Heart left ventricle (tissue), 16 donors: ENCODE measurements at regions of chr17 and their contacts with region 1.

Region 1: DNA sequence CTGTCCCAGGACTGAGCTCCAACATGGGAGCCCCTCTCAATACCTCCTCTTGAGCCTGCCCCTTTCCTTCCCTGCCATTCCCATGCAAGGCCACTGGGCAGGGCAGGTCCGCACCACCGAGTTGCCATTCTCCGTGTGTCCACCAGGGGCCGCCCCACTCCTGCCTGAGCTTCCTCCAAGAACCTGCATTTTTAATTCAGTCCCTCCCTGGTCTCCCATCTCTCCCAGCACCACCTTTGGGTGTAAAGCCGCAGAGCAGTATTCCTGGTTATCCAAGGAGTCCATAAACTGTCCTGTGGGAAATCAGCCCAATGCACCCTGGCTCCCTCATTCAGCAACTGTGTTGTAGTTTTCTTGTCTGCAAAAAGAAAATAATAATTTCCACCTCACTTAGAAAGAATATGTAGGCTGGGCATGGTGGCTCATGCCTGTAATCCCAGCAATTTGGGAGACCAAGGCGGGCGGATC is 15.9 kb upstream of the ANKRD40CL start:
- DNase-seq: peak; percentile 81 to 91 (median 84)
- ATAC-seq: peak; percentile 66 to 89 (median 86)
- H3K4me3 ChIP-seq: no peak overlapping the region
- H3K27ac ChIP-seq: no peak overlapping the region
- H3K4me1 ChIP-seq: peaks cover 0 to 19% (median 3%) of the 10 kb centered on the region in 12 donors
- H3K27me3 ChIP-seq: no peaks in the 10 kb centered on the region
- CTCF ChIP-seq: peak; percentile 93 to 99 (median 94)
- POLR2A ChIP-seq: no peak

Region 2: GRCh38 chr17:50707289-50708049 is 75.8 kb before region 1 on chr17 and contains the start of gene ANKRD40:
- intact Hi-C with region 1: no loop called
- DNase-seq: peak; percentile 91 to 94 (median 91)
- ATAC-seq: peak; percentile 80 to 92 (median 88)
- H3K4me3 ChIP-seq: peak within 1 kb of the TSS; percentile 50 to 81 (median 74)
- H3K27ac ChIP-seq: peak within 1 kb of the TSS; percentile 94 to 100 (median 97)
- H3K4me1 ChIP-seq: peaks cover 0 to 60% (median 41%) of the 10 kb centered on the region in 12 donors
- H3K27me3 ChIP-seq: no peaks in the 10 kb centered on the region
- CTCF ChIP-seq: no peak
- POLR2A ChIP-seq: peak; percentile 9 to 59
- total RNA-seq, gene ANKRD40: 38.8 to 55.4 (median 47.2) TPM

Region 3: GRCh38 chr17:50834429-50835300 is 51.4 kb after region 1 on chr17:
- intact Hi-C with region 1: loop called in 1 of 10 experiments (anchors 2 kb)
- DNase-seq: no peak
- ATAC-seq: peak in 3 of 4 donors; percentile 8 to 18 (median 14)
- H3K4me3 ChIP-seq: peak overlapping the region in 9 of 12 donors; percentile 29 to 54 (median 40)
- H3K27ac ChIP-seq: no peak overlapping the region
- H3K4me1 ChIP-seq: peaks cover 0 to 24% (median 5%) of the 10 kb centered on the region in 12 donors
- H3K27me3 ChIP-seq: peaks cover 0 to 4% (median 0%) of the 10 kb centered on the region in 9 donors
- CTCF ChIP-seq: no peak
- POLR2A ChIP-seq: no peak

Region 4: GRCh38 chr17:50841949-50842354 is 58.7 kb after region 1 on chr17:
- intact Hi-C with region 1: loop called (anchors 1 to 2 kb)
- DNase-seq: peak; percentile 49 to 81 (median 60)
- ATAC-seq: peak in 3 of 4 donors; percentile 47 to 73 (median 57)
- H3K4me3 ChIP-seq: no peak overlapping the region
- H3K27ac ChIP-seq: no peak overlapping the region
- H3K4me1 ChIP-seq: peaks cover 0 to 20% (median 6%) of the 10 kb centered on the region in 12 donors
- H3K27me3 ChIP-seq: no peaks in the 10 kb centered on the region
- CTCF ChIP-seq: peak; percentile 55 to 87 (median 79)
- POLR2A ChIP-seq: no peak

Region 5: DNA sequence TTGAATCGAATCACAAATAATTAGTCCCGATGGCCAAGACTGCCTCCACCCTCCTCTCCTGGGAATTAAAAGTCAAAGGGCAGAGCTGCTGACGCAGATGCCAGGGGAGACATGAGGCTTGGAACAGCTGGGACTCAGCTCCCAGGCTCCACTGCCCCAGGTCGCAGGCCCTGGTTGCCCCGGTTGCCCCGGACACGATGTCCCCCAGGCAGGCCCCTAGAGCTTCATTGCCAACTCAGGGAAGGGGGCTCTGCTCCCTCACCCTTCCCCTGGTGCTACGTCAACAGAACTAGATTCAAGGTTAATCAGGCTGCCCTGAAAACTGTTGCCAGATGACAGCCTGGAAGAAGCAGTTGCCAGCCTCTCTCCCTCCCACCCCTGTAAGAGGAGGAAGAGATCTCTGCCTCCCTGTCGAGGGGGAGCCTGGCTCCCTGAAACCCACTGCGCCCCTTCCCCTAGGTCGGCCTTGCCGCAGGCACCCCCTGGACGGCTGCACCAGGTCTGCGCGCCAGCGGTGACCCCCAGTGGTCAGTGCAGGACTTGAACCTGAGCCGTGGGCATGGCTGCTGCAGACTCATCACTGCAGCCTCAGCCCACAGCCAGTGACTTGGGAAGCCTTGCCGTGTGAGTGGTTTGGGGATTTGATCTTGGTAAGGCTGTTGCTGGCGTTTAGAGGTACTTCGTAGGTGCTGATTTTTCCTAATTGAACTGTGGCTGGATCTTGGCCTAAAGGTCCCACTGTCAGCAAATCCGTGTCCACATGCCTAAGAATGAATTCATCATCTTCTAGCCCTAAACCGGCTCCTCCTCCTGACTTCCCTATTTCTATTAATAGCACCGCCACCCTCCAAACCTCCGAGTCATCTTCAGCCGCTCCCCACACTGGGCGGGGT is 167.0 kb after region 1 on chr17:
- intact Hi-C with region 1: loop called in 7 of 10 experiments (anchors 2 to 5 kb)
- DNase-seq: peak; percentile 77 to 90 (median 86)
- ATAC-seq: peak; percentile 78 to 88 (median 86)
- H3K4me3 ChIP-seq: peak overlapping the region in 3 of 12 donors; percentile 0 to 16 (median 2)
- H3K27ac ChIP-seq: peak overlapping the region; percentile 71 to 91 (median 82)
- H3K4me1 ChIP-seq: peaks cover 0 to 67% (median 46%) of the 10 kb centered on the region in 12 donors
- H3K27me3 ChIP-seq: no peaks in the 10 kb centered on the region
- CTCF ChIP-seq: peak; percentile 62 to 87 (median 81)
- POLR2A ChIP-seq: no peak

Region 6: GRCh38 chr17:50956750-50957523 is 173.7 kb after region 1 on chr17:
- intact Hi-C with region 1: loop called (anchors 1 to 5 kb)
- DNase-seq: peak; percentile 59 to 83 (median 62)
- ATAC-seq: peak; percentile 52 to 76 (median 72)
- H3K4me3 ChIP-seq: no peak overlapping the region
- H3K27ac ChIP-seq: peak overlapping the region in 4 of 12 donors; percentile 51 to 78 (median 70)
- H3K4me1 ChIP-seq: peaks cover 0 to 42% (median 28%) of the 10 kb centered on the region in 12 donors
- H3K27me3 ChIP-seq: no peaks in the 10 kb centered on the region
- CTCF ChIP-seq: peak; percentile 56 to 81 (median 72)
- POLR2A ChIP-seq: no peak